Heart right ventricle (tissue), 16 donors: ENCODE measurements at regions of chr19 and their contacts with region 1.

Region 1: GRCh38 chr19:51016798-51017683 is 2.5 kb downstream of the KLK10 start:
- DNase-seq: peak; percentile 23 to 68
- ATAC-seq: peak in 7 of 8 donors; percentile 20 to 73 (median 51)
- H3K4me3 ChIP-seq: peak overlapping the region in 9 of 10 donors; percentile 10 to 51 (median 29)
- H3K27ac ChIP-seq: no peak overlapping the region
- H3K4me1 ChIP-seq: peaks cover 0 to 37% (median 28%) of the 10 kb centered on the region in 9 donors
- H3K27me3 ChIP-seq: peaks cover 23 to 83% (median 76%) of the 10 kb centered on the region in 7 donors
- CTCF ChIP-seq: peak in 8 of 9 donors; percentile 51 to 84 (median 70)

Region 2: GRCh38 chr19:50933640-50934039 is 83.4 kb before region 1 on chr19:
- intact Hi-C with region 1: loop called in 1 of 10 experiments (anchors 10 kb)
- DNase-seq: no peak
- ATAC-seq: no peak
- H3K4me3 ChIP-seq: no peak overlapping the region
- H3K27ac ChIP-seq: no peak overlapping the region
- H3K4me1 ChIP-seq: no peaks in the 10 kb centered on the region
- H3K27me3 ChIP-seq: peaks cover 0 to 70% (median 39%) of the 10 kb centered on the region in 7 donors
- CTCF ChIP-seq: no peak

Region 3: GRCh38 chr19:50959731-50960500 is 57.1 kb before region 1 on chr19:
- intact Hi-C with region 1: no loop called
- DNase-seq: no peak
- ATAC-seq: no peak
- H3K4me3 ChIP-seq: no peak overlapping the region
- H3K27ac ChIP-seq: no peak overlapping the region
- H3K4me1 ChIP-seq: no peaks in the 10 kb centered on the region
- H3K27me3 ChIP-seq: peaks cover 0 to 49% (median 25%) of the 10 kb centered on the region in 7 donors
- CTCF ChIP-seq: no peak

Region 4: DNA sequence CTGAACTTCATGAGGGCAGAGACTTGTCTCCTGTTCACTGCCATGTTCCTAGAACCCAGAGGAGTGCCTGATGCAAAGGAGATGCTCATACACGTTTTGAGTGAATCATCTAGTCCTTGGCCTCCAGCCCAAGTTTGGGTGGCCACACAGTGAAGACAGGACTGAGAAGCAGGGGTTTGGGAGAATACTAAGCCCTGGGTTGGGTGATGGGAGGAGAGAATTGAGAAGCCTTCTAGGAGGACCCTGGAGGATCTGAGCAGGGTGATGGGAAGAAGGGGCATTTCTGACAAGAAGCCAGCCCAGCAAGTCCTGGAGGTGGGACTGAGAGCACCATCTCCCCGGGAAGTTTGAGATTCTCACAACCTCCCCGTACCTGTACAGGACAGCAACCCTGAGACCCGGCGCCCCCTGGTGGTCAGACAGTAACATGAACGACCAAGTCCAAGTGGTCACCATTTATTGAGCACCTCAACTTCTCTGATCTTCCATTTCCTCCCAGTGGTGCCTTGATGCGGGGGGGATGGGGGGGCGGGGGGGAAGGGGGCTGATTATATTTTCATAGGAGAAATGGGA is 80.2 kb after region 1 on chr19:
- intact Hi-C with region 1: loop called in 8 of 10 experiments (anchors 1 to 5 kb)
- DNase-seq: peak; percentile 62 to 77
- ATAC-seq: peak in 7 of 8 donors; percentile 32 to 77 (median 63)
- H3K4me3 ChIP-seq: no peak overlapping the region
- H3K27ac ChIP-seq: no peak overlapping the region
- H3K4me1 ChIP-seq: peaks cover 0 to 30% (median 10%) of the 10 kb centered on the region in 9 donors
- H3K27me3 ChIP-seq: no peaks in the 10 kb centered on the region
- CTCF ChIP-seq: peak; percentile 23 to 69 (median 61)

Region 5: GRCh38 chr19:51166846-51167490 is 149.9 kb after region 1 on chr19:
- intact Hi-C with region 1: loop called in 8 of 10 experiments (anchors 5 to 10 kb)
- DNase-seq: no peak
- ATAC-seq: peak in 6 of 8 donors; percentile 58 to 79 (median 62)
- H3K4me3 ChIP-seq: no peak overlapping the region
- H3K27ac ChIP-seq: no peak overlapping the region
- H3K4me1 ChIP-seq: peaks cover 0 to 20% (median 0%) of the 10 kb centered on the region in 9 donors
- H3K27me3 ChIP-seq: peaks cover 0 to 38% (median 19%) of the 10 kb centered on the region in 7 donors
- CTCF ChIP-seq: no peak

Region 6: DNA sequence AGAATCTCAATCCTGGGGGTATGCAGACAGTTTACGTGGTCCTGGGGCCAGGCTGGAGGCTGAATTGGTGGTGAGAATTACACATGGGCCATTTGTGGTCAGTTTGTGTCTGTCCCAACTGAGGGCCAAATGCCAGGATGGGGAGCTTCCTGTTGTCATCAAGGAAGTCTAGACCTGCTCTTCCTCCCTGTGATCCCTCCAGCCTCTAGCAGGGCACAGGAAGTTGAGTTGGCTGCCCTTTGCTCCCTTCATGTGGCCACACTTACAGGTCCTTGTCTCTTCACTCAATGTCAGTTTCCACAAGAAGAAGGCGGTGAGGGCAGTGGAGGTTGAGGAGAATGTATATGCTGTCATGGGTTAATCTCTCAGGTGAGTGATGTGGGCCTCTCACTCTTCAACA is 155.2 kb after region 1 on chr19:
- intact Hi-C with region 1: loop called in 8 of 10 experiments (anchors 5 to 10 kb)
- DNase-seq: no peak
- ATAC-seq: no peak
- H3K4me3 ChIP-seq: no peak overlapping the region
- H3K27ac ChIP-seq: no peak overlapping the region
- H3K4me1 ChIP-seq: peaks cover 0 to 13% (median 0%) of the 10 kb centered on the region in 9 donors
- H3K27me3 ChIP-seq: peaks cover 0 to 63% (median 19%) of the 10 kb centered on the region in 7 donors
- CTCF ChIP-seq: no peak

Region 7: DNA sequence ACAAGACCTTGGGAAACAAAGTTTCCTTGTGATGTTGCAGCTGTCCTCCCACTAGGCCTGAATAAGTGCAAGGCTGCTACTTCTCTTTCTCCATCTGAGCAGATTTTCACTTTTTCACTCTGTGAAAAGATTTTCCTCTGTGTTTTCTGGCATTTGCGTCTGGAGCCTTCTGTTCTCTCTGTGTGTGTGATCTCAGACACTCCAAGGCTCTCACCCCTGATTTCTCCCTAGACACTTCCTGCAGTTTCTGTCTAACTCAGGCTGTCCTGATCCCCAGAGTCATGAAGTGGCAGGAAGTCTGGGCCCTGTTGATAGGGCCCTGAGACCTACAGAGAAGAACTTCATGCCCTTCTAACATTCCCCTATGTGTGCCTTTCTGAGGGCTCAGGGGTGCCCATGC is 162.2 kb after region 1 on chr19:
- intact Hi-C with region 1: loop called in 4 of 10 experiments (anchors 5 to 10 kb)
- DNase-seq: no peak
- ATAC-seq: peak in 5 of 8 donors; percentile 21 to 61 (median 48)
- H3K4me3 ChIP-seq: no peak overlapping the region
- H3K27ac ChIP-seq: peak overlapping the region in 2 of 10 donors; percentile 21 to 31
- H3K4me1 ChIP-seq: peaks cover 0 to 5% (median 0%) of the 10 kb centered on the region in 9 donors
- H3K27me3 ChIP-seq: peaks cover 0 to 37% (median 28%) of the 10 kb centered on the region in 7 donors
- CTCF ChIP-seq: no peak